Activated naive CD4-positive, alpha-beta T cell treated with anti-CD3 and anti-CD28 coated beads for 36 hours (primary cell): ENCODE measurements at regions of chr3 and their contacts with region 1.

Region 1: DNA sequence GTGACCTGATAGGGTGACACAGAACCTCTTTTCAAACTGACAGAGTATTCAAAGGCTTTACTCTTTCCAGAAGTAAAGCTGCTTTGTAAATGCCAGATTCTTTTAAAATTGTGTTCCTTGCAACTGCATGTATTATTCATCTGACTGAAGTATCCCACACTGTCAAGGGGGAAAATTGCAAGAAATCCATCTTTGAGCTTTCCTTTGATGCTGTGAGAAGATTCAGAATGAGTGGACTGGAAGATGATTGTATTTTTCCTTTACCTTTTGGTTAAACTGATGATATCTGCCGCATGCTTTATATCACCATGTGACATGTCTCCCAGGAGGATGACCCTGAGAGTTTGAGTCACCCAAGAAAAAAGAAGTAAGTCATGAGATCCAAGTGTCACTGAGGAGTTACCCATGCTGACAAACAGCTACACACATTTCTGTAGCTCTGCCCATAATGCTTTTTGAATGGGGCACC is 250.8 kb upstream of the CBLB start:
- DNase-seq: peak; percentile 57
- H3K4me3 Mint-ChIP-seq: no peak overlapping the region
- H3K27ac Mint-ChIP-seq: peak overlapping the region; percentile 73
- H3K4me1 Mint-ChIP-seq: peaks cover 28% of the 10 kb centered on the region
- H3K27me3 Mint-ChIP-seq: no peaks in the 10 kb centered on the region

Region 2: GRCh38 chr3:105676621-105677300 is 442.9 kb before region 1 on chr3:
- CTCF ChIA-PET with region 1: no interaction called
- intact Hi-C with region 1: loop called (anchors 2 kb)
- DNase-seq: peak; percentile 77
- H3K4me3 Mint-ChIP-seq: no peak overlapping the region
- H3K27ac Mint-ChIP-seq: peak overlapping the region; percentile 87
- H3K4me1 Mint-ChIP-seq: peaks cover 18% of the 10 kb centered on the region
- H3K27me3 Mint-ChIP-seq: no peaks in the 10 kb centered on the region

Region 3: GRCh38 chr3:105686278-105686897 is 433.3 kb before region 1 on chr3:
- CTCF ChIA-PET with region 1: no interaction called
- intact Hi-C with region 1: loop called (anchors 2 kb)
- DNase-seq: no peak
- H3K4me3 Mint-ChIP-seq: no peak overlapping the region
- H3K27ac Mint-ChIP-seq: no peak overlapping the region
- H3K4me1 Mint-ChIP-seq: peaks cover 26% of the 10 kb centered on the region
- H3K27me3 Mint-ChIP-seq: no peaks in the 10 kb centered on the region

Region 4: DNA sequence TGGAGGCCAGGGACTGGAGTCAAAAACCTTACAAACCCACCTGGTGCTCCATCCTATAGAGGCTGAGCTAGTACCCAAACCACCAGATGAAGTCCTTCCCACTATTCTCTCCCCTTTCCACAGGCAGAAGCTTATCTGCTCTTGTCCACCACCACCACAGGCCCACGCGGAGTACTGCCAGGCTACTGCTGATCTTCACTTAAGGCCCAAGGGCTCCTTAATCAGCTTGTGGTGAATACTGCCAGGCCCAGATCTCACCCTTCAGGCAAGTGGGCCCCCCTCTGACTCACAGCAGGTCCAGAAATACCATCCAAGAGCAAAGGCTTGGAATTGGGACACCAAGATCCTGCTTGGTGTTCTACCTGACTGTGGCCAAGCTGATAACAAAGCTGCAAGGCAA is 347.2 kb after region 1 on chr3:
- CTCF ChIA-PET with region 1: no interaction called
- intact Hi-C with region 1: no loop called
- DNase-seq: no peak
- H3K4me3 Mint-ChIP-seq: no peak overlapping the region
- H3K27ac Mint-ChIP-seq: no peak overlapping the region
- H3K4me1 Mint-ChIP-seq: peaks cover 4% of the 10 kb centered on the region
- H3K27me3 Mint-ChIP-seq: no peaks in the 10 kb centered on the region